ENCODE measurements at regions of chr4 and their contacts with region 1.

Region 1: DNA sequence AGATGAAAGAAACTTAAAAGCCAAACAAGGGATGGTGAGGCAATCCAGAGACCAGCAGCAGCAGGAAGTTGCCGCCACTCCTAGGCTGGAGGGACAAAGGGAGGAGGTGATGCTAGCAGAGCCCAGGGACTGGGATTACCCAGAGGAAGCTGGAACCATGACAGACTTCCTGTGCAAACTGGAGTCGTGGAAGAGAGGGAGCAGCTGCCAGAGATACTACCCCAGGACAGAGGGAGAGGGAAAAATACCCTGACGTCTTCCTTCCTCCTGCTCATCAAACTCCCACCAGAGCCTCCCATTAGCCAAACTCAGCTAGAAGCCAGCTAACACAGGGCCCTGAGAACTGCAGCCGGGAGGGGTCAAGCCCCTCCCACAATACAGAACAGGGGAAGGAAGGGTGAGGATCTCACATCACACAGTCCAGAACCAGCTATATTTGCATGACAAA is 101.2 kb upstream of the KLF3 start:
- DNase-seq: peak; percentile 28
- ATAC-seq: peak; percentile 65
- H3K4me3 ChIP-seq: no peak overlapping the region
- H3K27ac ChIP-seq: peak overlapping the region; percentile 77; the same call in 1 of the 2 replicates
- H3K4me1 ChIP-seq: peaks cover 18% of the 10 kb centered on the region
- H3K27me3 ChIP-seq: no peaks in the 10 kb centered on the region
- CTCF ChIP-seq: no peak
- POLR2A ChIP-seq: no peak
- RAD21 ChIP-seq: no peak

Region 2: DNA sequence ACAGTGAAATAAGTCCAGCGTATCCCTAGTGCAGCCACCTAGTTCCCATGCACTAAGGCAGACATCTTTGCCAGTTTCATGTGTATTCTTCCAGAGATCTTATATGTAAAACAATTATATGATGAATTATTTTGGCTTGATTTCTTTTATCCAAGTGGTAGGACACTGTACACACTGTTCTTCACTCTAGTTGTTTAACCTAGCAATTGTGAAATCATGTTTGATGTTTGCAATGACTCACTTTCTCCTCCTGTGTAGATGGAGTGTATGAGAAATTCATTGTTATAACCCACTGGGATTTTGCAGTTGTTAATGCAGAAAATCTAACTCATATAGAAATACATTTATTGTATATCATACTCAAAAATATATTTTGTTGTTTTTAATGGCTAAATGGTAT is 689.4 kb before region 1 on chr4:
- CTCF ChIA-PET with region 1: no interaction called
- POLR2A ChIA-PET with region 1: no interaction called
- dilution Hi-C with region 1: no loop called
- in situ Hi-C with region 1: no loop called
- intact Hi-C with region 1: no loop called
- DNase-seq: peak; percentile 75
- ATAC-seq: peak; percentile 69
- H3K4me3 ChIP-seq: no peak overlapping the region
- H3K27ac ChIP-seq: no peak overlapping the region
- H3K4me1 ChIP-seq: no peaks in the 10 kb centered on the region
- H3K27me3 ChIP-seq: no peaks in the 10 kb centered on the region
- CTCF ChIP-seq: no peak
- POLR2A ChIP-seq: no peak
- RAD21 ChIP-seq: no peak

Region 3: GRCh38 chr4:38601244-38601897 is 38.6 kb after region 1 on chr4:
- CTCF ChIA-PET with region 1: no interaction called
- POLR2A ChIA-PET with region 1: no interaction called
- dilution Hi-C with region 1: no loop called
- in situ Hi-C with region 1: no loop called
- intact Hi-C with region 1: loop called (anchors 5 kb)
- DNase-seq: peak; percentile 63
- ATAC-seq: peak; percentile 53
- H3K4me3 ChIP-seq: no peak overlapping the region
- H3K27ac ChIP-seq: no peak overlapping the region
- H3K4me1 ChIP-seq: peaks cover 18% of the 10 kb centered on the region
- H3K27me3 ChIP-seq: no peaks in the 10 kb centered on the region
- CTCF ChIP-seq: no peak
- POLR2A ChIP-seq: no peak
- RAD21 ChIP-seq: no peak

Region 4: GRCh38 chr4:38663801-38664705 is 101.3 kb after region 1 on chr4 and contains the start of gene KLF3:
- CTCF ChIA-PET with region 1: no interaction called
- POLR2A ChIA-PET with region 1: no interaction called
- dilution Hi-C with region 1: no loop called
- in situ Hi-C with region 1: no loop called
- intact Hi-C with region 1: loop called (anchors 2 kb)
- DNase-seq: peak; percentile 82
- ATAC-seq: peak; percentile 80
- H3K4me3 ChIP-seq: peak within 1 kb of the TSS; percentile 77
- H3K27ac ChIP-seq: peak within 1 kb of the TSS; percentile 97
- H3K4me1 ChIP-seq: peaks cover 5% of the 10 kb centered on the region
- H3K27me3 ChIP-seq: no peaks in the 10 kb centered on the region; the same call in 1 of the 2 replicates
- CTCF ChIP-seq: no peak
- POLR2A ChIP-seq: peak; percentile 88
- RAD21 ChIP-seq: no peak
- total RNA-seq, gene KLF3: 8.2 and 9.4 TPM in 2 replicates

Measured in IMR-90 (cell line).